Calu3 (cell line): ENCODE measurements at regions of chr6 and their contacts with region 1.

Region 1: DNA sequence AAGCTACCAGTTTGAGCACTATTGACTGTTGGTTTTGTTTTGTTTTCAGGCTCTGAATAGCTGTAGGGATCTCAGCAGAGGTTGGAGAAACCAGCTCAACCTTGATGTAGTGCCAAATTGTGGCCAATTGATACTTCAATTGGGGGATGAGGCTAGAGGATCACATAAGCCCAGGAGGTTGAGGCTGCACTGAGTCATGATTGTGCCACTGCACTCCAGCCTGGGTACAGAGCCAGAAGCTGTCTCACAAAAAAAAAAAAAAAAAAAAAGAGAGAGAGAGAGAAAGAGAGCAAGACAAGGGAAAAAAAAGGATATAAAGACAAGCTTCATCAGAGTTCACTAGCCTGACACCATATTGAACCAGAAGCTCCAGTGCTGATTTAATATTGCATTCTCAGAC is 702.1 kb downstream of the FRK start:
- DNase-seq: no peak
- H3K4me3 Mint-ChIP-seq: no peak overlapping the region
- H3K27ac Mint-ChIP-seq: no peak overlapping the region
- H3K4me1 Mint-ChIP-seq: no peaks in the 10 kb centered on the region
- H3K27me3 Mint-ChIP-seq: no peaks in the 10 kb centered on the region
- CTCF ChIP-seq: no peak

Region 2: GRCh38 chr6:114955363-114955762 is 403.3 kb before region 1 on chr6:
- CTCF ChIA-PET with region 1: interaction called, 17 read pairs
- intact Hi-C with region 1: no loop called
- DNase-seq: no peak
- H3K4me3 Mint-ChIP-seq: no peak overlapping the region
- H3K27ac Mint-ChIP-seq: no peak overlapping the region
- H3K4me1 Mint-ChIP-seq: no peaks in the 10 kb centered on the region
- H3K27me3 Mint-ChIP-seq: no peaks in the 10 kb centered on the region
- CTCF ChIP-seq: no peak